Right ventricle myocardium inferior (tissue), 1 donor: ENCODE measurements at regions of chr6 and their contacts with region 1.

Region 1: DNA sequence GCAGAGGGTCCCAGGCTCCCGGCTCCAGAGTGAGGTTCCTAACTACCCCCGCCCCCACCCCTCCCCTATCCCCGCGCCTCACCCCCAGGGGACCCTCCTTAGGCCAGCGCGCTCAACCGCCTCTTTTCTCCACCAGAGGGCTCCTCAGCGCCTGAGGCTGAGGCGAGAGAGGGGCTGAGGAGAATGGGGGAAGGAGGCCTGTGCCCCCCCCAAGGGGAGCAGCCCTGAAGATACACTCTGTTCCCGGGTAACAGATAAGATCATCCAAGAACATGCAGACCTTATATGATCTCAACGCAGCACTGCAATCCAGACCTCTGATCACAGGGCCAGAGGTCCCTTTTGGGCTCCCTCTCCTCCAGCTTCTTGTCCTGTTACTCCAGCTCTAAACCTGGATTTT is 43.3 kb upstream of the MRPS10 start:
- DNase-seq: no peak
- ATAC-seq: peak; percentile 67

Region 2: DNA sequence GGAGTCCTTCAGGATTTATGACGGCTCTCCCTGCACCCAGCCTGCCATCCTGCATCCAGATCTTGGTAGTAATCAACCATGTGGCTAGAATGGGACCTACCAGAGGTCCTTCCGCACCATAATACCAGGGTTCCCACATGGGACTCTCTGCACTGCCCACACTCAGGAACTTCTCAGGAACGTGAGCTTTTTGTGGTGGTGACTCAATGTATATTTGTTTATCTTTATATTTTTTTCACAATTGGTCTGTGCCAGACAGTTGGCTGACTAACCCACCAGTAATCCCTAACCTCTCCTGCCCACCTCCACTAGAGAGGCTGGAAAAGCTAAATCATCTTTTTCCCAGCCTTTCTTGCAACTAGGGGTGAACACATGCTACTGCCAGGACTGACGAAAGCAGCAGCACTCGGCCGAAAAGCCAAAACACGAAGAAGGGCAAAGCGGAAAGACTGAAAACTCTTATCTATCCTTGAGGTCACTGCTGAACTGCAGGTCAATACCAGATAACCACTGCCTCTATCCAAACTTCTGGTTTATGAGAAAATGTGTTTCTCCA is 77.8 kb after region 1 on chr6:
- intact Hi-C with region 1: no loop called
- DNase-seq: no peak
- ATAC-seq: no peak

Region 3: DNA sequence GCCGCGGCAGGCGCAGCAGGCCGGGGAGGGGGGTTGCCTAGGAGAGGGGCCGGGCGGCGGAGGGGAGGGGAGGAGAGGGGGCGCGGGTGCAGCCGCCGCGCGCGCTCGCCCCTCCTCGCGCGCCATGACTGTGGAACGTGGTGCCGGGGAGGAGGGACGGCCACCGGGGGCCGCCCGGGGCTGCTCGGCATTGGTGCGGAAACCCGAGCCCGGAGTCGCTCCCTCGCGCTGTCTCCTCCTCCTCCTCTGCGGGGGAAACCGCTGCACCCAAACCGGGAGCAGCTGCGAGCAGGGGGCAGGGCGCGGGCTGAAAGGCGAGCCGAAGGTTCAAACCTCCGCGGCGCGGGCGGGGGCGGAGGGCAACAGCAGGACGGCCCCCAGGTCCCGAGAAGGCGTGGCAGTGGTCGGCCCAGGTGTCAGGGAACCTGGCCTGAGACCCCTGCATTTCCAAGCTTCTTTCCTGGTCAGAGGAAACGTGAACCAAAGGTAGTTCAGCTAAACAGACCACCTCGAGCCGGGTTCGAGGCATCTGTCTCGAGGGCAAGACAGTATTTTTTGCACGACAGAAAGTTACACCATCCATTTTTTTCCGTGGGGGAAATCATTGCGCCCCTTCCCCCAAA is 192.2 kb after region 1 on chr6:
- intact Hi-C with region 1: loop called (anchors 5 kb)
- DNase-seq: peak; percentile 92
- ATAC-seq: peak; percentile 93

Region 4: DNA sequence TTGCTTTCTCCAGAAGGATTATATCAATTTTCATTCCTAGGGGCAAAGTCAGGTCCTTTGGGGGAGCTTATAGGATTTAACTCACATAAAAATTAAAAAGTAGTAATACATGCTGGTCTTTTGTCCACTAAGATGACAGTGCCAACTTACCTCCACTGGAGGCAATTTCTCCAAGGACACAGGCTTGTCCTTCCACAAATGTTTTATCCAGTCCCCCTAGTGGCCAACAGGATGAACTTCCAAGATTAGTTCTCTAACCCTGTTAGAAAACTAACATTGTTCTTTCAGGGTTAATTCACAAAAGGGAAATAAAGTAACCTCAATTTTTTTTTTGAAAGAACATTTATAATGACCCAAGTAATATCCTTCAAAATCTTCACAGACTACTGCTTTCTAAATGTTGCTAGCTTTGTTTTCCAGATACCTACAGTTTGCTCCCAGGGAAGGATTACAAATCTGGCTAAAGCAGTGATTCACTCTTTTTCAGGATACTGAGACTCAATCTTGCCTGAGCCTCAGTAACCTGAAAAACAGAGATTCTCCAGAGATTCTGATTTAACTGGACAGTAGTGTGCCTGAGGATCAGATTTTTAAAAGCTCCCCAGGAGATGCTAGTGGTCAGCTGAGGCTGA is 271.2 kb after region 1 on chr6:
- intact Hi-C with region 1: loop called (anchors 2 kb)
- DNase-seq: no peak
- ATAC-seq: no peak

Region 5: DNA sequence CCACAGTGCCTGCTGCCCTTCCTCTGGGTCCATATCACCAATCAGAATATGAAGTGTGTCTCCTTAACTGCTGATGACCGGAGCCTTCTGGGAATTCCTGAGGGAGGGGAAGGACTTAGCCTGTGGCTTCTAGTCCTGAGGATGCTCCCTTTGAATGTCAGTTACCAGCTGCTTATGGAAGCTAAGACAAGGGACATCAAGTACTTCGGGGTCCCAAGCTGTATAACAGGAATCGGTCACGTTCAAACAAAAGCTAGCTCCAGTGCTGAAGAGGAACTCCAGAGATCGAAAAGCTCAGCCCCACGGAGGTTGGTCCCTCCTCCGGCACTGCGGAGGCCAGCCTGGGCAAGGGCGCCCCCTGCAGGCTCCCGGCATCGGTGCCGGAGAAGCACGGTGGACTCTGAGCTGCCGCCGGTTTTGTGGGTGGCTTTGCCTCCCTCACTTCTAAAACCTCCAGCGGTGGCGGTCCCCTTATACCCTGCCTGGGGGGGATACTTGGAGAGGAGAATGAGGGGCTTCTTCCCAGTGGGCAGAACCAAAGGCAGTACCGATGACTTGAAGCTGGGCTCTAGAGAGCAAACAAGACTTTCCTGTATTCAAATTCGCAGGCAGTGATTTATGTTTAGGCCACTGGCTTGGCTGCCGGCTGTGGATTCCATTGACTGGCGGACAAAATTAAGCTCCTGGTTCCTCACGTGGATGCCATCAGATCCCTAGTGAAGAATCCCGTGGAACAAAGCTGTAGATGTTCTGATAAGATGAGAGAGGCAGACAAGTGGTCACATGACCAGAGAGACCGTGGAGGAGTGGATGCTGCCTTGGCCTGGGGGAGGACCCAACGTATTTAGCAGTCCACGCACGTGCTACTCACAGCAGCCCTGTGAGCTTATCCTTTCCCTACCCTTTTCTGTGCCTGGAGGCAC is 286.7 kb after region 1 on chr6:
- intact Hi-C with region 1: loop called (anchors 2 kb)
- DNase-seq: peak; percentile 94
- ATAC-seq: peak; percentile 99